Calu3 (cell line): ENCODE measurements at regions of chr12 and their contacts with region 1.

Region 1: DNA sequence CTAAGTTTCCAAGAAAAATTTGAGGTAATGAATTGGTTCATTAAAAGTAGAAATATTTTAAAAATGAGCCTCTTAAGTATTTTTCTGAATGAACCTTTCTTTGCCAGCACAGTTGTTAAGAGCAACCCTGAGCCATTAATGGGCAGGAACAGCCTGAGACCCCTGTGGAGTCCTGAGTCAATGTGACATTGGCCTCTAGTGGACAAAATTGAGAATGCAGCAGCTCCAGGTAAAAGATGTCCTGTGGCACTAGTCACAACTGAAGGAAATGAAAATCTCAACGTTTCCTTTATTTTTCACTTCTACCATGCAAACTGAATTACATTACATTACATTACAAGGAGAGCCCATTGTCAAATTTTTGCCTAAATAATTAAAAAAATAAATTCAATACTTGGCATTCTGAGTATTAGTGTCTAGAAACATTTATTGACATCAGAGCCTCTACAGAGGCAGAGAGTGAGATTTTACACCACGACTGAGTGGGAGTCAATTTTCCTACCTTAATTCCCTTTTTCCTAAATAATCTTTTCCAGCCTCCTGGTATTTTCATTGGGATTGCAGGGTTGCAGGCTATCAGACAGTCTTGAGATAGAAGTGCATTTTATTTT is 135.7 kb downstream of the PPM1H start:
- DNase-seq: peak; percentile 83
- H3K4me3 Mint-ChIP-seq: no peak overlapping the region
- H3K27ac Mint-ChIP-seq: peak overlapping the region; percentile 60
- H3K4me1 Mint-ChIP-seq: peaks cover 36% of the 10 kb centered on the region
- H3K27me3 Mint-ChIP-seq: no peaks in the 10 kb centered on the region
- CTCF ChIP-seq: peak; percentile 74

Region 2: DNA sequence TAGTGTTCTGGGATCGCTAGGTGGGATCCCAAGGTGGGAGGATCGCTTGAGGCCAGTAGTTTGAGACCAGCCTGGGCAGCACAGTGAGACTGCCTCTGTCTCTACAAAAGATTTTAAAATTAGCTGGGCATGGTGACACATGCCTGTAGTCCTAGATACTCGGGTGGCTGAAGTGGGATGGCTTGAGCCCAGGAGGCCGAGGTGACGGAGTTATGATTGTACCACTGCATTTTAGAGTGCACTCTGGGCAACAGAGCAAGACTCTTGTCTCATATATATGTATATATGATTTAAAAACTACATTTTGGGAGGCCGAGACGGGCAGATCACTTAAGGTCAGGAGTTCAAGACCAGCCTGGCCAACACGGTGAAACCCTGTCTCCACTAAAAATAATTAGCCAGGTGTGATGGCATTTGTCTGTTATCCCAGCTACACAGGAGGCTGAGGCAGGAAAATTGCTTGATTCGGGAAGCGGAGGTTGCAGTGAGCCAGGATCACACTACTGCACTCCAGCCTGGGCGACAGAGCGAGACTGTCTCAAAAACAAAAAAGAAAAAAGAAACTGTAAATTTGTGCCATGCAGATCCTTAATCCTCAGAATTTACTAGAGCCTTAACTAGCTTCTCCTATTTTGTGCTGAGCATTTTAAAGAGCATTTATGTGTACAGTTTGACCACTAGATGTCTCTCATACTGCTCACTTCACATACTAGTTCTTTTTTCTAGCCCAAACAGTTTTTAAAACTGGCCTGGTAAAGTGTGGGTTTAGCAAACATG is 217.8 kb before region 1 on chr12:
- CTCF ChIA-PET with region 1: interaction called, 41 read pairs
- intact Hi-C with region 1: loop called (anchors 1 kb)
- DNase-seq: no peak
- H3K4me3 Mint-ChIP-seq: no peak overlapping the region
- H3K27ac Mint-ChIP-seq: no peak overlapping the region
- H3K4me1 Mint-ChIP-seq: no peaks in the 10 kb centered on the region
- H3K27me3 Mint-ChIP-seq: no peaks in the 10 kb centered on the region
- CTCF ChIP-seq: peak; percentile 27